Mammary epithelial cell (primary cell): ENCODE measurements at regions of chr1 and their contacts with region 1.

Region 1: GRCh38 chr1:150162862-150163706 is 13.4 kb downstream of the PLEKHO1 start:
- DNase-seq: peak; percentile 97
- H3K4me3 ChIP-seq: peak overlapping the region; percentile 11 to 31 (median 28)
- H3K27ac ChIP-seq: peak overlapping the region; percentile 71
- H3K4me1 ChIP-seq: peaks cover 14% of the 10 kb centered on the region
- H3K27me3 ChIP-seq: no peaks in the 10 kb centered on the region
- CTCF ChIP-seq: peak; percentile 0 to 24

Region 2: DNA sequence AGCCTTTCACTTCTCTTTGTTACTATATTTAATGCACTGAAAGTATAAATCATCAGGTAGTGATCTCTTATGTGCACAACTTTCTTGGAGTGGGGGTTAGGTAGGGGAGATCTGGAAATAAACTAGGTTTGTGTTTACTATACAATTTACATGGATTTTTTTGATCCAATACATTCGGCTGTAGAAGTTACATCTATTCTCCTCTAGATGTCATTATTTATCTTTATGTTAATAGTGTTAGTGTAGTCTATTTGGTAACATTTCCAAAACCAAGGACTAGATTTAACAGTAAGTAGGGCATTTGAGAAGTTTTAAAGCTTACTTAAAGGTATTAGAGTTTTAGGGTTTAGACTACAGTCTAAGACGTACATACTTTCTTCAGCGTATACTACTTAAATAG is 90.1 kb before region 1 on chr1:
- CTCF ChIA-PET with region 1: no interaction called
- dilution Hi-C with region 1: loop called (anchors 5 kb)
- in situ Hi-C with region 1: loop called in 1 of 2 experiments (anchors 5 kb)
- intact Hi-C with region 1: no loop called
- DNase-seq: no peak
- H3K4me3 ChIP-seq: no peak overlapping the region
- H3K27ac ChIP-seq: no peak overlapping the region
- H3K4me1 ChIP-seq: peaks cover 5% of the 10 kb centered on the region
- H3K27me3 ChIP-seq: no peaks in the 10 kb centered on the region
- CTCF ChIP-seq: peak; percentile 33 to 35

Region 3: DNA sequence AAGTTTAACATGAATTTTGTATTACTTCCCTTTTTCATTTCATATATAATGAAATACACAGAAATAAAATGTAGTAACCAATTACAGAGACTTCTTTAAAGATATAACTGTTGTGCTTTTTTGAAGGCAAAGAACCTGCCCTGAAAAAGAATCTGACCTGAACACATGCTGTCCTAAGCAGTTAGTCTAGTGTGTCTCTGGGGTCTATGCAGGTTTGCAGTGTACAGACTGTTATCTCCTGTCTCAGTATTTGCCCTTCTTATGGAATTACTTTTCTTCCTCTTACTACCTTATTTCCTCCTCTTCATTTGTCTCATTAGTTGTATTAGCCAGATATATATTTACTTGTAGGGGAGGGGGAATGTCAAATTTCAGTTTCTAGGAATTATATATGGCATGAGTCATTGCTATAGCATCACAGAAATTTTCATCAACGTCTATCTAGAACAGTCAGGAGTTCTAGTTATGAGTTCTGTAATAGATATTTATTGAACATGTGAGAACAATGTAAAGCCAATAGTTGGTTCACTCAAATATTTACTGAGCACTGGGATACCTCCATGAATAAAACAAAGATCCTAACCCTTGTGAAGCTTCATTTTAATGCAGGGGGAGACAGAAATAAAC is 41.7 kb before region 1 on chr1:
- CTCF ChIA-PET with region 1: no interaction called
- dilution Hi-C with region 1: loop called (anchors 5 kb)
- in situ Hi-C with region 1: no loop called
- intact Hi-C with region 1: no loop called
- DNase-seq: no peak
- H3K4me3 ChIP-seq: no peak overlapping the region
- H3K27ac ChIP-seq: no peak overlapping the region
- H3K4me1 ChIP-seq: no peaks in the 10 kb centered on the region
- H3K27me3 ChIP-seq: no peaks in the 10 kb centered on the region
- CTCF ChIP-seq: no peak

Region 4: DNA sequence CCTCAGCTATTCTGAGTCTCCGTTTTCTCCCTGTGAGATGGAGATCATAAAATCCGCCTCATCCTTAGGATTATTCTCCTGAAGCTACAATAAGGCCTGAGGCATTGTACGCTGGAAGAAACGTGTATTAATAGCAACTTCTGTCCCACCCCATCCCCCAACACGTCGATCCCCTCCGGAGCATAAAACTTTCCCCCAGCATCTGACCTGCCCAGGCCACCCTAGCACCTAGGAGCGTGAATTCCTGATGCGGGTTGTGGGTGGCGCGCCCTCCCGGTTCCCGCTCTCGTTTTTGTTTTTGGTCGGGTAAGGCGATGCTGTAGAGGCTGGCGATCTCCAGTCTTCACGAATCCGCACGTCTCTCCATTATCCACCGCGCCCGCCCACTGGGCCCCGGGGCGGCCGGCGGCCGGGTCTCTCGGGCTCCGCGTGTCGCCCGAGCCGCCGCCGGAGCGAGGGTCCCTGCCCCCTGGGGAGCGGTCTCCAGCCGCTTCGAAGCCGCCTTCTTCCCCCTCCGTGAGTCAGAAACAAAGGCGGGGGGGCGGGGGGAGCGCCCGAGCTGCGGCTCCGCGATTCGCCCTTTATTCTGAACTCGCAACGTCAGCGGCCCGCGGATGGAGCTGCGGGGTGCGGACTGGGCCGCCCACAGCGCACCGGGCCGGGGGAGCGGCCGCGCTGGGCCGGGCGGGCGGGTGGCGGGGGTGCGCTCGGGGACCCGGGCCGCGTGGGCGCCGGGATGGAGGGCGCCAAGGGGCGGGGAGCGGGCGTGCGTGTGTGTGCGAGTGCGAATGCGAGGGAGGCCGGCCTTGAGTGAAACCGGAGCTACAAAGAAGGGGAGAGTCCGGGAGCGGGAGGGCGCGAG is 13.6 kb before region 1 on chr1 and contains the start of gene PLEKHO1:
- CTCF ChIA-PET with region 1: no interaction called
- dilution Hi-C with region 1: no loop called
- in situ Hi-C with region 1: no loop called
- intact Hi-C with region 1: loop called (anchors 2 kb)
- DNase-seq: peak; percentile 71
- H3K4me3 ChIP-seq: peak within 1 kb of the TSS; percentile 58 to 61 (median 60)
- H3K27ac ChIP-seq: no peak within 1 kb of the TSS
- H3K4me1 ChIP-seq: peaks cover 7% of the 10 kb centered on the region
- H3K27me3 ChIP-seq: no peaks in the 10 kb centered on the region
- CTCF ChIP-seq: no peak
- total RNA-seq, gene PLEKHO1: 3.1 to 3.3 TPM

Region 5: GRCh38 chr1:150213170-150214098 is 50.4 kb after region 1 on chr1:
- CTCF ChIA-PET with region 1: no interaction called
- dilution Hi-C with region 1: loop called (anchors 5 kb)
- in situ Hi-C with region 1: no loop called
- intact Hi-C with region 1: no loop called
- DNase-seq: peak; percentile 79
- H3K4me3 ChIP-seq: peak overlapping the region; percentile 40 to 47 (median 41)
- H3K27ac ChIP-seq: peak overlapping the region; percentile 68
- H3K4me1 ChIP-seq: no peaks in the 10 kb centered on the region
- H3K27me3 ChIP-seq: no peaks in the 10 kb centered on the region
- CTCF ChIP-seq: peak; percentile 14 to 41

Region 6: DNA sequence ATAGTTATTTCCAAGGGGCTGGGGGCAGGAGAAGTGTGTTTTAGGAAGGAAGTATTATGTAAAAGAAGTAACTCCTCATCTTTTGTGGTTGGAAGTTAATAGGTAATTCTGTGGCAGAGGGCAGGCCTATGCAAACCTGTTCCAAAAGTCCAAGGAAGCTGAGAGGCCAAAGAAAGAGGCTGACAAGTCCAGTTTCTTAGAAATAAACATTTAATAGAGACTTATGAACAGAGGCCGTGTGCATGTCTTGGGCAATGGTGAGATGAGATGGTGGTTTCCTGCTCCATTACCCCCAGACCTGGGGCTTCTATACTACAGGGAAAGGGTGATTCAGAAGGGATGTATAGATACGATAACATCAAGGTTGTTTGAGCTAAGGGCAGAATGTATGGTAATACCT is 86.9 kb after region 1 on chr1:
- CTCF ChIA-PET with region 1: no interaction called
- dilution Hi-C with region 1: no loop called
- in situ Hi-C with region 1: no loop called
- intact Hi-C with region 1: no loop called
- DNase-seq: no peak
- H3K4me3 ChIP-seq: no peak overlapping the region
- H3K27ac ChIP-seq: no peak overlapping the region
- H3K4me1 ChIP-seq: no peaks in the 10 kb centered on the region
- H3K27me3 ChIP-seq: no peaks in the 10 kb centered on the region
- CTCF ChIP-seq: no peak

Region 7: DNA sequence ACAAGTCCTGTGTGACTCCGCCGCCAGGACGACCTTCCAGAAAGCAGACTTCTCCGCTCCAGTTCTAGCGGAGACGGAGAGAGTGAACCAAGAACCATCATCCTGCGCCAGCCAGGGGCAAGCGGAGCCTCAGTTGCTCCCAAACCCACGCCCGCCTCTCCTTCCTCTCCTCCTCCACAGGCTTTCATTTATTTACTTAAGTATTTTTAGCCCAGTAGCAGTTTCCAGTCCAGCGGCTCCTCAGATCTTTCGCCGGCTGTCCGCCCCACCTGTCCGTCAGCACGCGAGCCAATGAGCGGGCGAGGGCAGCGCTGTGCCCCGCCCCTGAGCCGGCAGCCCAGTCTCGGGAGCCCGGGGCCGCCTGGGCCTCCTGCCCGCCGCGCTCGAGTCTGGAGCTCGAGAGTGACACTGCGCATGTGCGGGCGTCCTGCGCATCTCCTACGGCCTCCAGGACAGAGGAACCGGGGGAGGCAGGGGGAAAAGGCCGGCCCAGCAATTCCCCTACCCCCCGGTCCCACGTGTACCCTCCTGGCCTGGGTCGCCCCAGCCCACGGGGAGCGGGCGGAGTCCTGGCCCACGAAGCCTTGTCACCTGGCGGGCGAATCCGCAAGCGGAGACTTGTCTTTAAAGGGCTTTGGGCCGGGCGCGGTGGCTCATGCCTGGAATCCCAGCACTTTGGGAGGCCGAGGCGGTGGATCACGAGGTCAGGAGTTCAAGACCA is 352.4 kb after region 1 on chr1 and contains the start of gene FALEC:
- CTCF ChIA-PET with region 1: no interaction called
- dilution Hi-C with region 1: no loop called
- in situ Hi-C with region 1: no loop called
- intact Hi-C with region 1: no loop called
- DNase-seq: peak; percentile 96
- H3K4me3 ChIP-seq: peak within 1 kb of the TSS; percentile 64 to 76 (median 65)
- H3K27ac ChIP-seq: peak within 1 kb of the TSS; percentile 46
- H3K4me1 ChIP-seq: peaks cover 13% of the 10 kb centered on the region
- H3K27me3 ChIP-seq: no peaks in the 10 kb centered on the region
- CTCF ChIP-seq: no peak
- total RNA-seq, gene FALEC: not detected